ENCODE measurements at regions of chr9 and their contacts with region 1.

Region 1: DNA sequence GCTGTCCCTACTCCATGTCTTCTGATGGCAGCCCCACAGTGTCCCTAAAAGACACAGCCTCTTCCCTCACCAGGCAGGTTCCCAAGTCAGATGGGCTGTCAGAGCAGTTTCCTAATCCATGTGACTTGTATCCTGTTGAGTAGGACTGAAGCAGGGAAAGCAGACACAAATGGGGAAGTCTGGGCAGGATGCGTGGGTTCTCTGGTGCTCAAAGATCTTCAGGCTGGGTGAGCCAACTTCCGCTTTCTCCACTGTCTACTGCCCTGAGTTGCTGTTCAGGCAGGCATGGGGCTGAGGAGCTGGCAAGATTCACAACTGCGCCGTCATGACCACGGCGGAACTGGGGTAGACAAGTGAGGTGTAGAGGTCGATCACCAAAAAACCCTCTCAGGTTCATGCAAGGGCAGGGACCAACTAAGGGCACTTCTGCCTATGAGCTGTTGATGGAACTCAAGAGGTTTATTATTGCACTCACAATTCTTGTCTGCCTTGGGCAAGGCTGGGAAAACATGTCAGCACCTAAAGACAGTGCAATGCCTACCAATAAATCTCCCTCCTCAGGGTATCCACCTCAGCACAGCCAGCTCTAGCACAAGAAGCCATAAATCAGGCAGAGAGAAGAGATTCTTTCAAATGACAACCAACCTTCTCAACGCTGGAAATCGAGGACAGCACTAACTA is 83.4 kb downstream of the RAPGEF1 start:
- DNase-seq: peak; percentile 95
- ATAC-seq: peak; percentile 96
- H3K4me3 ChIP-seq: peak overlapping the region in 2 of 5 experiments; percentile 2 to 6
- H3K4me3 Mint-ChIP-seq: peak overlapping the region; percentile 77
- H3K27ac ChIP-seq: peak overlapping the region; percentile 63 to 90
- H3K27ac Mint-ChIP-seq: peak overlapping the region; percentile 93
- H3K4me1 ChIP-seq: peaks cover 70 to 77% of the 10 kb centered on the region in 2 donors
- H3K4me1 Mint-ChIP-seq: peaks cover 90% of the 10 kb centered on the region
- H3K27me3 ChIP-seq: no peaks in the 10 kb centered on the region
- H3K27me3 Mint-ChIP-seq: no peaks in the 10 kb centered on the region
- CTCF ChIP-seq: no peak

Region 2: DNA sequence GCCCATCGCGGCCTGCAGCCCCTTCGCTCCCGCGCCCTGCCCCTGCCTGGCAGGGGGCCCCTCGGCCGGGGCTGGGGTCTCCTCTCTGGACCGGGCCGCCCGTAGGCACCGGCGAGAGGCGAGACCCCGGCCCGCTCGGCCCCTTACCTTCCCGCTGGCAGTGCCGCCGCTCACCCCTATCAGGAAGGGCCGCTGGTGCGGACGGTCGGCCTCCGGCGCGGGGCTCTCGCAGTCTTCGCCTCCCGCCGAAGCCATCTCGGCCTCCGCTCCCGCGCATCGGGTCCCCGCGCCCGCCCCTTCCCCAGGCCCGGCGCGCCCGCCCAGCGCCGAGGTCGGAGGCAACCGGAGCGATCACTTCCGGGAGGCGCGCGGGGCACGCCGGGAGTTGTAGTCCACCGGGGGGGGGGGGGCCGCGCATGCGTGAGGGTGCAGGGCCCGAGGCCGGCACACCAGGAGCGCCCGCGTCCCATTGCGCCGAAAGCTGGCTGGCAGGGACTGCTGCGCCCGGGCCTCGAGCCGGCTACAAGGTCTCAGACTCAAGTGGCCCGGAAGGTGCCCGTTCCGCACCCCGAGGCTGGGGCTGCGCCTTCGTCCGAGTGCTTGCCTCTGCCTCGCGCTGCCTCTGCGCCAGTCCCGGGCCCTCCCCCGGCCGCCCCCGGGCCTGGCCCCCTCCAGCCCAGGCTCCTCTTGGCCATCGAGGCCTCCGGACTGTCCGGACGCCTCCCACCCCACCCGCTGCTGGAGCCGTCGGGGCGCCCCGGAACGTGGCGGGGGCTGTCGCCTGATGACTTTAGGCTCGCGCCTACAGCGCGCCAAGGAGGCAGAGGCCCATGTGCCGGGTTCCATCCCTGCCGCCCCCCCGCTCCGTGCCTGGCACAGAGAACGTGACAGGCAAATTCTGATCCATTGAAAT is 125.3 kb before region 1 on chr9 and contains the start of gene UCK1:
- CTCF ChIA-PET with region 1: no interaction called
- POLR2A ChIA-PET with region 1: no interaction called
- intact Hi-C with region 1: no loop called
- DNase-seq: peak; percentile 89
- ATAC-seq: peak; percentile 92
- H3K4me3 ChIP-seq: peak within 1 kb of the TSS; percentile 21 to 88 (median 70)
- H3K4me3 Mint-ChIP-seq: peak within 1 kb of the TSS; percentile 79
- H3K27ac ChIP-seq: peak within 1 kb of the TSS; percentile 18 to 64
- H3K27ac Mint-ChIP-seq: peak within 1 kb of the TSS; percentile 67
- H3K4me1 ChIP-seq: peaks cover 23 to 31% of the 10 kb centered on the region in 2 donors
- H3K4me1 Mint-ChIP-seq: peaks cover 21% of the 10 kb centered on the region
- H3K27me3 ChIP-seq: no peaks in the 10 kb centered on the region
- H3K27me3 Mint-ChIP-seq: no peaks in the 10 kb centered on the region
- CTCF ChIP-seq: no peak
- total RNA-seq, gene UCK1: 31.8 and 39.3 TPM in 2 replicates

Region 3: GRCh38 chr9:131590908-131591844 is 65.3 kb before region 1 on chr9:
- CTCF ChIA-PET with region 1: interaction called, 4 read pairs
- POLR2A ChIA-PET with region 1: no interaction called
- intact Hi-C with region 1: loop called (anchors 2 kb)
- DNase-seq: peak; percentile 85
- ATAC-seq: peak; percentile 87
- H3K4me3 ChIP-seq: no peak overlapping the region
- H3K4me3 Mint-ChIP-seq: no peak overlapping the region
- H3K27ac ChIP-seq: no peak overlapping the region
- H3K27ac Mint-ChIP-seq: peak overlapping the region; percentile 82
- H3K4me1 ChIP-seq: peaks cover 0 to 13% of the 10 kb centered on the region in 2 donors
- H3K4me1 Mint-ChIP-seq: peaks cover 27% of the 10 kb centered on the region
- H3K27me3 ChIP-seq: no peaks in the 10 kb centered on the region
- H3K27me3 Mint-ChIP-seq: no peaks in the 10 kb centered on the region
- CTCF ChIP-seq: peak; percentile 83

Region 4: GRCh38 chr9:131627648-131628458 is 28.6 kb before region 1 on chr9:
- CTCF ChIA-PET with region 1: interaction called, 3 read pairs
- POLR2A ChIA-PET with region 1: interaction called, 5 read pairs
- intact Hi-C with region 1: loop called (anchors 1 kb)
- DNase-seq: peak; percentile 84
- ATAC-seq: peak; percentile 79
- H3K4me3 ChIP-seq: no peak overlapping the region
- H3K4me3 Mint-ChIP-seq: peak overlapping the region; percentile 89
- H3K27ac ChIP-seq: peak overlapping the region; percentile 83 to 85
- H3K27ac Mint-ChIP-seq: peak overlapping the region; percentile 94
- H3K4me1 ChIP-seq: peaks cover 24 to 52% of the 10 kb centered on the region in 2 donors
- H3K4me1 Mint-ChIP-seq: peaks cover 65% of the 10 kb centered on the region
- H3K27me3 ChIP-seq: no peaks in the 10 kb centered on the region
- H3K27me3 Mint-ChIP-seq: no peaks in the 10 kb centered on the region
- CTCF ChIP-seq: no peak

Region 5: DNA sequence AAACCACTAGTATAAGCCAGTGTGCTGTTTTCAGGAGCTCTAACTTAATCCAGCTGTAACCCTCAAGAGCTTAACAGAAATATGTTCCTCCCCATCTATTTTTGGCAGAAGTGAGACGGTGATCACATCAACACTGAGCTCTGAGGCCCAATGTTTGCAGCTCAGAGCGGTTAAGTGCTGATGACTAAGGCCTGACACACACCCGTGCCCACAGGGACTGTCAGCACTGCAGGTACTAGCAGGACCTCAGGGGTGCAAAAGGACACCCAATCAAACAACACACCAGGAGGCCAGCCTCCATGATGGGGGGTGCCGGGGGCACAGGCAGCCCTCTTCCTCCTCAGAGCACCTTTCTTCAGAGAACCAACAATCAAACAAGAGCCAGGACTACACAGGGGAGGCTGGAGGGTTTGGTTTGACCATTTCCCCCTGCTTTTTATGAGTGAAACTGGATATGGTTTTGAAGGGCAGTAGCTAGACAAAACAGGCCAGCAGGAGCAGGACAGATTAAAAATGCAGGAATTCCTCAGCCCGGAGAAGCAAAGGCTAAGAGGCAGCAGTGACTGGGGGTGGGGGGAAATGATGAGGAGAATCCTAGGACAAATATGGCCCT is 22.1 kb after region 1 on chr9:
- CTCF ChIA-PET with region 1: interaction called, 13 read pairs
- POLR2A ChIA-PET with region 1: interaction called, 18 read pairs
- intact Hi-C with region 1: loop called (anchors 1 kb)
- DNase-seq: peak; percentile 76
- ATAC-seq: peak; percentile 87
- H3K4me3 ChIP-seq: peak overlapping the region in 2 of 5 experiments; percentile 1 to 67
- H3K4me3 Mint-ChIP-seq: peak overlapping the region; percentile 99
- H3K27ac ChIP-seq: peak overlapping the region; percentile 88 to 96
- H3K27ac Mint-ChIP-seq: peak overlapping the region; percentile 94
- H3K4me1 ChIP-seq: peaks cover 74 to 79% of the 10 kb centered on the region in 2 donors
- H3K4me1 Mint-ChIP-seq: peaks cover 94% of the 10 kb centered on the region
- H3K27me3 ChIP-seq: no peaks in the 10 kb centered on the region
- H3K27me3 Mint-ChIP-seq: no peaks in the 10 kb centered on the region
- CTCF ChIP-seq: no peak

Region 6: GRCh38 chr9:131727184-131727759 is 70.8 kb after region 1 on chr9:
- CTCF ChIA-PET with region 1: interaction called, 13 read pairs
- POLR2A ChIA-PET with region 1: interaction called, 13 read pairs
- intact Hi-C with region 1: loop called (anchors 1 kb)
- DNase-seq: no peak
- ATAC-seq: no peak
- H3K4me3 ChIP-seq: peak overlapping the region in 1 of 5 experiments; percentile 46
- H3K4me3 Mint-ChIP-seq: peak overlapping the region; percentile 89
- H3K27ac ChIP-seq: peak overlapping the region; percentile 99 to 100
- H3K27ac Mint-ChIP-seq: peak overlapping the region; percentile 91
- H3K4me1 ChIP-seq: peaks cover 88 to 97% of the 10 kb centered on the region in 2 donors
- H3K4me1 Mint-ChIP-seq: peaks cover 87% of the 10 kb centered on the region
- H3K27me3 ChIP-seq: no peaks in the 10 kb centered on the region
- H3K27me3 Mint-ChIP-seq: no peaks in the 10 kb centered on the region
- CTCF ChIP-seq: no peak

Region 7: GRCh38 chr9:131747356-131747755 is 90.9 kb after region 1 on chr9:
- CTCF ChIA-PET with region 1: interaction called, 11 read pairs
- POLR2A ChIA-PET with region 1: no interaction called
- intact Hi-C with region 1: no loop called
- DNase-seq: peak; percentile 72
- ATAC-seq: peak; percentile 56
- H3K4me3 ChIP-seq: no peak overlapping the region
- H3K4me3 Mint-ChIP-seq: no peak overlapping the region
- H3K27ac ChIP-seq: no peak overlapping the region
- H3K27ac Mint-ChIP-seq: no peak overlapping the region
- H3K4me1 ChIP-seq: peaks cover 17 to 19% of the 10 kb centered on the region in 2 donors
- H3K4me1 Mint-ChIP-seq: peaks cover 32% of the 10 kb centered on the region
- H3K27me3 ChIP-seq: no peaks in the 10 kb centered on the region
- H3K27me3 Mint-ChIP-seq: no peaks in the 10 kb centered on the region
- CTCF ChIP-seq: peak; percentile 64

Measured in B cell (primary cell).